ENCODE measurements at regions of chr7 and their contacts with region 1.

Region 1: DNA sequence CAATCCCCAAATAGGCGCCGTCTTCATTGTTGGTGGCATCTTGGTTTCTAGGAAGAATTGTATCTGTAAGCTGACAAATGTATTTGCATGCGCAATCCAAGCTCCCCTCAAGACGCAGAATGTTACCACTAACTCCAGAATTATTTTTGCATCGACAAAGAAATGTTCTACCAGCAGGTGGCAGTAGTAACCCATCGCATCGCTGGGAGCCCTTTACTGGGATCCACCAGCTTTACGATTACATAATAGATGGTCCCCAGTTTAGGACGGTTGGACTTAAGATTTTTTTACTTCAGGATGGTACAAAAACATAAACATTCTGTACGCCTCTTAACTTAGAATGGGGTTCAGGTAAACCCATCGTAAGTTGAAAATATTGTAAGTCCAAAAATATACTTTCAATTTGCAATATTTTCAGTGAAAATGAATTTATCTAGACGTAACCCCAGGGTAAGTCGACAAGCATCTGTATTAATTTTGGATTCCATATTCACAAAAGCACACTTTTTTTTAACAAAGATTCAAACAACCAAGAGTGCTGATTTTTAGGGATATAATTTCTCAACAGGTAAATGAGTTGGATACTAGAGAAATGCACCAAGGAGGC is 114.0 kb upstream of the COBL start:
- DNase-seq: peak; percentile 66
- ATAC-seq: no peak
- H3K4me3 Mint-ChIP-seq: no peak overlapping the region
- H3K27ac Mint-ChIP-seq: no peak overlapping the region
- H3K4me1 Mint-ChIP-seq: no peaks in the 10 kb centered on the region
- H3K27me3 Mint-ChIP-seq: peaks cover 1% of the 10 kb centered on the region

Region 2: DNA sequence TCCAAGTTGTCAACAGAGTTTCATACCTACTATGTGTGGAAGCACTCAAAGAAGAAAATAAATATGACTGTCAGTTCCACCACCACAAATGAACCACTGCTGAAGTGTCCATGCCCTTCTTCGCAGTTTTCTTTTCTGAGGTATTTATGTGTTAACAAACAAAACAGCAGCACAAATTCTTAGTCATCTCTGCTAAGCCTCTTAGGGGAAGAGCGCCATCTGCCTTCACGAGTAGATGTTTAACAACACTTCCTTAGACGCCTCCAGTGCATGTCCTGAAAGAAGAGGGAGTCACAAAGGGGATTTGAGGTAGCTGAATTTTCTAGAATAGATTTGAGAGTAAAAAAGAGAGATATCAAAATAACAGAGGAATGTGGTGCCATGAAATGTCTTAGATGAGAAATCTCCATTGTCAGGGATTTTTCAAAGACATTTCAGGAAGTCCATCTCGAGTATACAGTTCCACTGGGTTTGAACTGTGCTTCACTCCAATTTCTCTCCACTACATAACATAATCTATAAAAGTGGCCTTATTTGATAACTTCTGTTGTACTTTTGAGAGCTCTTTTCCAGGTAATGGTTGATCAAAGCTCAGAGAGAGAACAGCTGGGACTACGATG is 829.6 kb after region 1 on chr7:
- CTCF ChIA-PET with region 1: no interaction called
- POLR2A ChIA-PET with region 1: no interaction called
- intact Hi-C with region 1: loop called in 1 of 2 experiments (anchors 10 kb)
- DNase-seq: no peak
- ATAC-seq: no peak
- H3K4me3 Mint-ChIP-seq: no peak overlapping the region
- H3K27ac Mint-ChIP-seq: no peak overlapping the region
- H3K4me1 Mint-ChIP-seq: no peaks in the 10 kb centered on the region
- H3K27me3 Mint-ChIP-seq: no peaks in the 10 kb centered on the region

Region 3: DNA sequence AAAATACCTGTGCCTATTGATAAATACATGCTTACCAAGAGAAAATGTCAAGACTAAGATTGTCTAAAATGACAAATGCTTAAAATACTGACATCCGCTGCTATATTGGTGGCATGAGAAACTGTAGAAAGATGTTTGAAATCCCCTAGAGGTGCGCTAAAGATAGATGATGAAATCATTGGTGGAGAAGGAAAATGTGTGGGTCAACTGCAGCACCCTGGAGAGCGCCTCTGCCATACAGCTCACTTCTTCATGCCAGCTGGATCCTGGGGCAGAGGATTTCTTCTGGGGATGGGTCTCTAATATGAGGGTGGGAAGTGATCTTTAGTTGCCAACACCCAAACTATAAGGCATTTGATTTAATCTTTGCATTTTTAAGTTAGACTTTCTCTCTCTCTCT is 924.5 kb after region 1 on chr7:
- CTCF ChIA-PET with region 1: no interaction called
- POLR2A ChIA-PET with region 1: no interaction called
- intact Hi-C with region 1: loop called in 1 of 2 experiments (anchors 10 kb)
- DNase-seq: no peak
- ATAC-seq: no peak
- H3K4me3 Mint-ChIP-seq: no peak overlapping the region
- H3K27ac Mint-ChIP-seq: no peak overlapping the region
- H3K4me1 Mint-ChIP-seq: no peaks in the 10 kb centered on the region
- H3K27me3 Mint-ChIP-seq: no peaks in the 10 kb centered on the region

Measured in activated CD4-positive, alpha-beta T cell treated with anti-CD3 and anti-CD28 coated beads for 36 hours (primary cell).